Common myeloid progenitor, CD34-positive (primary cell): ENCODE measurements at regions of chr19 and their contacts with region 1.

Region 1: DNA sequence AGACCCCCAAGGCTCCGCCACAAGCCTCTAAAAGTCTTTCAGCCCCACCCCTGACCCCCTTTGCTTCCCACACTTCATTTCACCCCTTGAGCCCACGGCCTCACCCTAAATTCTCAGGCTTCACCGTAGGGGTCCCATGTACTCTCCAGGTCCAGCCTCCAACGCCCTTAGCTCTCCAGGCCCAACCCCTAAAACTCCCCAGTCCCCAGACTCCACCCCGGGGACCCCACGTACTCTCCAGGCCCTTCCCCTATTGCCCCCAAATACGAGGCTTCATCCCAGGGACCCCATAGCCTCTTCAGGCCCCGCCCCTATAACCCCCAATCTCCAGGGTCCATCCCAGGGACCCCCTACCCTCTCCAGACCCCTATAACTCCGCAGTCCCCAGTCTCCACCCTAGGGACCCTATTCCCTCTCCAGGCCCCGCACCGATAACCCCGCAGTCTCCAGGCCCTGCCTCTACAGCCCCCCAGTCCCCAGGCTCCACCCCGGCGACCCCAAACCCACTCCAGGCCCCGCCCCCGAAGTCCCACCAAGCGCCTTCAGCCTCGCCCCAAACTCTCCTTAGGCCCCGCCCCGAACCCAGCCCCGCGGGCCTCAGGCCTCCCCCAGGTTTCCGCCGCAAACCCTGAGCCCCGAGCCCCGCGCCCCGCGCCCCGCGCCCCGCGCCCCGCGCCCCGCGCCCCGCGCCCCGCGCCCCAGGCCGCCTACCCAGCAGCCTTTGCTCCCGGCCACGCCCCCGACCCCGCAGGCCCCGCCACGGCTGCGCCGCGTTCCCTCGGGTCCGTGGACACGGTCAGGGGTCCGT is 540 bp downstream of the MED16 start:
- DNase-seq: peak in 2 of 3 donors; percentile 41 to 51
- H3K4me3 ChIP-seq: peak overlapping the region; percentile 76 to 93 (median 84)
- H3K27ac ChIP-seq: peak overlapping the region; percentile 96 to 100
- H3K4me1 ChIP-seq: peaks cover 0 to 9% (median 6%) of the 10 kb centered on the region in 4 experiments
- H3K27me3 ChIP-seq: no peaks in the 10 kb centered on the region

Region 2: GRCh38 chr19:907183-907853 is 14.9 kb after region 1 on chr19:
- CTCF ChIA-PET with region 1: interaction called, 15 read pairs
- POLR2A ChIA-PET with region 1: interaction called, 20 read pairs
- DNase-seq: peak; percentile 89 to 98 (median 96)
- H3K4me3 ChIP-seq: peak overlapping the region in 4 of 7 experiments; percentile 10 to 57 (median 23)
- H3K27ac ChIP-seq: peak overlapping the region; percentile 62 to 96
- H3K4me1 ChIP-seq: peaks cover 10 to 56% (median 52%) of the 10 kb centered on the region in 4 experiments
- H3K27me3 ChIP-seq: no peaks in the 10 kb centered on the region